ENCODE measurements at regions of chr15 and their contacts with region 1.

Region 1: GRCh38 chr15:98523912-98524662 is 124.3 kb upstream of the IGF1R start:
- DNase-seq: no peak
- ATAC-seq: no peak
- H3K4me3 Mint-ChIP-seq: no peak overlapping the region
- H3K27ac Mint-ChIP-seq: peak overlapping the region; percentile 67; the same call in 1 of the 2 replicates
- H3K4me1 Mint-ChIP-seq: peaks cover 21% of the 10 kb centered on the region
- H3K27me3 Mint-ChIP-seq: no peaks in the 10 kb centered on the region
- CTCF ChIP-seq: no peak

Region 2: DNA sequence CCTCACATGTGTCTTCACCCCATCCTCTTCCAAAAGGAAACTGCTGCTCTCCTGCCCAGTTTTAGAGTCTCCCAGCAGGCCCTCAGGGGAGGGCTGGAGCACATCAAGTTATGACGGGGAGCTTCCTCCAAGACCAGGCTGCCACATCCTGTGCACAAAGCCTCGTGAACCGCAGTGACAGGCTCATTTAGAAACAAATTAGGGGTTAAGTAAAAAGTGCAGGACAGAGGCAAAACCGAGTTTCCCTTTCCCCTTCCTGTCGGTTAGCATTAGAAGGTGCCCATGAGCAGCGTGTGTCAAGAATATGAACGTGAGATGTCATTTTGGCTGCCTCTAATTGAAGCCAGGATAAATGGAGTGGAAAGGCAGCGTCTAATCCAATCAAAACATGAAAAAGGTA is 363.9 kb before region 1 on chr15:
- CTCF ChIA-PET with region 1: no interaction called
- POLR2A ChIA-PET with region 1: no interaction called
- DNase-seq: no peak
- ATAC-seq: no peak
- H3K4me3 Mint-ChIP-seq: no peak overlapping the region
- H3K27ac Mint-ChIP-seq: no peak overlapping the region
- H3K4me1 Mint-ChIP-seq: no peaks in the 10 kb centered on the region
- H3K27me3 Mint-ChIP-seq: no peaks in the 10 kb centered on the region
- CTCF ChIP-seq: no peak

Region 3: GRCh38 chr15:98621063-98621462 is 97.0 kb after region 1 on chr15:
- CTCF ChIA-PET with region 1: no interaction called
- POLR2A ChIA-PET with region 1: no interaction called
- DNase-seq: no peak
- ATAC-seq: no peak
- H3K4me3 Mint-ChIP-seq: no peak overlapping the region
- H3K27ac Mint-ChIP-seq: no peak overlapping the region
- H3K4me1 Mint-ChIP-seq: peaks cover 7% of the 10 kb centered on the region
- H3K27me3 Mint-ChIP-seq: no peaks in the 10 kb centered on the region
- CTCF ChIP-seq: no peak

Region 4: GRCh38 chr15:98658831-98659699 is 135.0 kb after region 1 on chr15:
- CTCF ChIA-PET with region 1: interaction called, 23 read pairs
- POLR2A ChIA-PET with region 1: no interaction called
- DNase-seq: no peak
- ATAC-seq: peak; percentile 31
- H3K4me3 Mint-ChIP-seq: no peak overlapping the region
- H3K27ac Mint-ChIP-seq: peak overlapping the region; percentile 48
- H3K4me1 Mint-ChIP-seq: peaks cover 94% of the 10 kb centered on the region
- H3K27me3 Mint-ChIP-seq: no peaks in the 10 kb centered on the region
- CTCF ChIP-seq: peak; percentile 81

Measured in WTC11 (cell line).